Calu3 (cell line): ENCODE measurements at regions of chr11 and their contacts with region 1.

Region 1: DNA sequence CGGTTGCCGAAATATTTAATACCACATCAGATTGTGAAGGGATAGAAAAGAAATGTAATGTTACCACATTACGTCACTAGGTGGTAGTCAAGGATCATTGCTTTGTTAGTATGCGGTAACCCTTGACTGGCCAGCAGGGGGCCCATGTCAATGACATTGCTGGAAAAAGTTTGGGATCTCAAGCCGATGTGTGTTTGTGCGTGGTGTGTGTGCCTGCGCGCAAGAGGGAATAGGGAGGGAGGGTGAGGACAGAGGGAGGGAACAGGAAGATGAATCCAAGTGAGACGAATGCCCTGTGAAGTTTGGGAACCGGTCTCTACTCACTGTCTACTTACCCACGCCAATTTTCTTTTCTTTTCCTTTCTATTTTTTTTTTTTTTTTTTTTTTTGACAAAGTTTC is 10.7 kb upstream of the MRGPRX2 start:
- DNase-seq: peak; percentile 79
- H3K4me3 Mint-ChIP-seq: no peak overlapping the region
- H3K27ac Mint-ChIP-seq: no peak overlapping the region
- H3K4me1 Mint-ChIP-seq: peaks cover 7% of the 10 kb centered on the region
- H3K27me3 Mint-ChIP-seq: peaks cover 41% of the 10 kb centered on the region
- CTCF ChIP-seq: peak; percentile 94

Region 2: GRCh38 chr11:18836417-18836816 is 234.8 kb before region 1 on chr11:
- CTCF ChIA-PET with region 1: no interaction called
- intact Hi-C with region 1: no loop called
- DNase-seq: no peak
- H3K4me3 Mint-ChIP-seq: no peak overlapping the region
- H3K27ac Mint-ChIP-seq: no peak overlapping the region
- H3K4me1 Mint-ChIP-seq: no peaks in the 10 kb centered on the region
- H3K27me3 Mint-ChIP-seq: peaks cover 100% of the 10 kb centered on the region
- CTCF ChIP-seq: no peak

Region 3: GRCh38 chr11:19055016-19055415 is 16.2 kb before region 1 on chr11:
- CTCF ChIA-PET with region 1: no interaction called
- intact Hi-C with region 1: no loop called
- DNase-seq: no peak
- H3K4me3 Mint-ChIP-seq: no peak overlapping the region
- H3K27ac Mint-ChIP-seq: no peak overlapping the region
- H3K4me1 Mint-ChIP-seq: no peaks in the 10 kb centered on the region
- H3K27me3 Mint-ChIP-seq: peaks cover 70% of the 10 kb centered on the region
- CTCF ChIP-seq: no peak

Region 4: GRCh38 chr11:19116971-19117750 is 45.9 kb after region 1 on chr11 and contains the start of gene ZDHHC13:
- CTCF ChIA-PET with region 1: interaction called, 13 read pairs
- intact Hi-C with region 1: no loop called
- DNase-seq: peak; percentile 97
- H3K4me3 Mint-ChIP-seq: peak within 1 kb of the TSS; percentile 89
- H3K27ac Mint-ChIP-seq: peak within 1 kb of the TSS; percentile 77
- H3K4me1 Mint-ChIP-seq: peaks cover 35% of the 10 kb centered on the region
- H3K27me3 Mint-ChIP-seq: no peaks in the 10 kb centered on the region
- CTCF ChIP-seq: peak; percentile 62
- total RNA-seq, gene ZDHHC13: 22.4 and 26.8 TPM in 2 replicates

Region 5: DNA sequence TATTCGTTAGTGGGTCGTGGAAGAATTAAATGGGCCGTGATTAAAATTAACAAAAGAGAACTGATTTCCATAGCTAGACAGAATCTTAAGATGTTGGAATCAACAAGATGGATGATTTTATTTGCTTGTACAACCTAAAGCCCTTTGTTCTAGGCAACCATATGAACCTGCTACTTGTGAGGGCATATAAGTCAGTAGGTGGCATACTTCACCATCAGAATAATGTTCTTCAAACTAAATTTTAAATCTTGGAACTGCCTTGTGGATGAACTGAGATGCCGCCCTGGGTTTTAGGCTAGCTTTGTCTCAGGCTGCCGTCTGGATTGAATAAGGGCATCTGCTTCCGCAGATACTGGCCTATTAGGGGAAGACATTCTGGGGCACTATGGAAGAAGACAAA is 89.6 kb after region 1 on chr11:
- CTCF ChIA-PET with region 1: no interaction called
- intact Hi-C with region 1: loop called (anchors 10 kb)
- DNase-seq: no peak
- H3K4me3 Mint-ChIP-seq: no peak overlapping the region
- H3K27ac Mint-ChIP-seq: no peak overlapping the region
- H3K4me1 Mint-ChIP-seq: peaks cover 13% of the 10 kb centered on the region
- H3K27me3 Mint-ChIP-seq: no peaks in the 10 kb centered on the region
- CTCF ChIP-seq: no peak

Region 6: DNA sequence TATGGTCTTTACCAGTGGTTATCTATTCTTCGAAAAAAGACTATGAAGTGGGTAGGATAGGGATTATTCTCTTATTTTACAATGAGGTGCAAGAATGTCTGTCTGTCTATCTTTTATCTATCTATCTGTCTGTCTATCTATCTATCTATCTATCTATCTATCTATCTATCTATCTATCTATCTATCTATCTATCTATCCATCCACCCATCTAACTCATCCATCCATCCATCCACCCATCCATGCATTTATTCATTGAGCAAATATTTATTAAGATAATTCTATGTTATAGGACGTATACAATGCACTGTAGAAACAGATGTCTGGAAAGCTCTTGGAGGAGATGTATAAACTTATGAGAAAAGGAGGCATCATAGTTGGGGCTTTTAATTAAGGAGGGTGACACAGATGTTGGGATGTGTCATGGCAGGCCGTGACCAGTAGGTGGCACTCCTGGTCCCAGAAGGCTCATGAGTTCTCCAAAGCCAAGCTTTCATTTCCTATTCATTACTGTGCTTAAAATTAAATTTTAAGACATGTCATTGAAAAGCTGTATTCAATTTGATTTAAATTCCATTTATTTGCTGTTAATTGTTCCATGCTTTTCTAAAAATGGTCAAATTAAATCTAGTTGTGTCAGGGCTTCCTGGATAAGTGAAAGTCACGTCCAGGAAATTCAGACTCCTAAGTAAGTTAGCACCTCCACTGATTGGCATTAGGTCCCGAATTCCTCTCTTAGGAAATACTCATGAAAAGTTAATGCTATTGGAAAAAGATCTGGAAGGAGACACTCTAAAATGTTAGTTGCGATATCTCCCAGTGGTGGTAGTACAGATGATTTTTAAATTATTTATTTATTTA is 188.5 kb after region 1 on chr11:
- CTCF ChIA-PET with region 1: no interaction called
- intact Hi-C with region 1: loop called (anchors 5 kb)
- DNase-seq: peak; percentile 76
- H3K4me3 Mint-ChIP-seq: no peak overlapping the region
- H3K27ac Mint-ChIP-seq: no peak overlapping the region
- H3K4me1 Mint-ChIP-seq: no peaks in the 10 kb centered on the region
- H3K27me3 Mint-ChIP-seq: peaks cover 25% of the 10 kb centered on the region
- CTCF ChIP-seq: peak; percentile 91

Region 7: DNA sequence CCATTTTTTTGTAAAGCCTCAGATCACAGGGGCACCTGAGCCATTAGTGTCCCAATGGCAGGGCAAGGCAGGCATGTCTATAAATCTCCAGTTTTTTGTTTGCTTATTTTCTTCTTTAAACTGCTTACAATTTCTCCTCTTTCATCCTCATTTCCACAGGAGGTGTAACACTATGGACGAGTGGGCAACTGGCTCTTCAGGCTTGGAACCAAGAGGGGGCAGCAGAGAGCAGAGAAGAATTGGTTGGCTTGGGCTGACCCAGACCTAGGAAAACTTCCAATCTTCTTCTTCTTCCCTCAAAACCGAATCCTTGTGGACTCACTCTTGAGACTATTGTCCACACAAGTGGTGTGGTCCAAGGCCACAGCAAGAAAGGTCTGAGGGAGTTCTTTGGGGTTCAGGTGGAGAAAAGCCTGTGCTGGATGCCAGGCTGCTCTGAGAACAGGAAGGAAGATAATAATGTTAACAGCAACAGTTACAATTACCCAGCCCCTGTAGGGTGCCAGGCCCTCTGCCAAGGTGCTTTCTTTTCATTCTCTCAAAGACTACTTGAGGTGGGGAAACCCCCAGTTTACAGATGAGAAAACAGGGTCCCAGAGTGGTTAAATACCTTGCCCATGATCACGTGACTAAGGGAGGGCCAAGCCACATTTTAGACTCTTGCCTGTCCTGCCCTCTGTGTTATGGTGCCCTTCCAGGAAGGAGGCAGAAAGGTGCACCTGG is 240.2 kb after region 1 on chr11:
- CTCF ChIA-PET with region 1: no interaction called
- intact Hi-C with region 1: loop called (anchors 5 kb)
- DNase-seq: peak; percentile 79
- H3K4me3 Mint-ChIP-seq: no peak overlapping the region
- H3K27ac Mint-ChIP-seq: no peak overlapping the region
- H3K4me1 Mint-ChIP-seq: no peaks in the 10 kb centered on the region
- H3K27me3 Mint-ChIP-seq: peaks cover 70% of the 10 kb centered on the region
- CTCF ChIP-seq: peak; percentile 81

Region 8: GRCh38 chr11:19553683-19554333 is 482.6 kb after region 1 on chr11:
- CTCF ChIA-PET with region 1: interaction called, 3 read pairs
- intact Hi-C with region 1: loop called (anchors 1 kb)
- DNase-seq: peak; percentile 86
- H3K4me3 Mint-ChIP-seq: no peak overlapping the region
- H3K27ac Mint-ChIP-seq: no peak overlapping the region
- H3K4me1 Mint-ChIP-seq: peaks cover 8% of the 10 kb centered on the region
- H3K27me3 Mint-ChIP-seq: peaks cover 70% of the 10 kb centered on the region
- CTCF ChIP-seq: peak; percentile 78